ENCODE measurements at regions of chr6 and their contacts with region 1.

Region 1: GRCh38 chr6:24855395-24856245 is 56.9 kb upstream of the ARMH2 start:
- DNase-seq: peak; percentile 49 to 90 (median 61)
- ATAC-seq: peak; percentile 66
- H3K4me3 ChIP-seq: no peak overlapping the region
- H3K4me3 Mint-ChIP-seq: peak overlapping the region; percentile 17
- H3K27ac ChIP-seq: peak overlapping the region; percentile 35 to 61
- H3K27ac Mint-ChIP-seq: peak overlapping the region; percentile 93
- H3K4me1 ChIP-seq: peaks cover 51% of the 10 kb centered on the region
- H3K4me1 Mint-ChIP-seq: peaks cover 67% of the 10 kb centered on the region
- H3K27me3 ChIP-seq: no peaks in the 10 kb centered on the region
- H3K27me3 Mint-ChIP-seq: no peaks in the 10 kb centered on the region
- CTCF ChIP-seq: peak; percentile 79

Region 2: DNA sequence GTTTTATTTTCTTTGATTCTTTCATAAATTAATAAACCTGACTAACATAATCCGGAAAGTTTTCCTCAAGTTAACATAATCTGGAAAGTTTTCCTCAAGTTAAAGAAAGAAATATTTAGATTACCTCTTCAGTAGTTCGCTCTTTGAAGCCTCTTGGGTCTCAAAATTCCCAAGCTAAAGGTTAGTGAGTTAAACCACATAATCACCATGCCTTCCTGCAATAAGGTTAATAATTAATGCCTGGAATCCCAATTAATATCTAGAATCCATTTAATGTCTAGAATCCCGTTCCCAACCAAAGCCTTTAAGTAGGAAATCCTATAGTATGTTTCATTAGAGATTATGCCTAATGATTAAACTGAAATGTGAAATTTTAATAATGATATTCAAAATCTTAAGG is 510.6 kb before region 1 on chr6:
- CTCF ChIA-PET with region 1: no interaction called
- POLR2A ChIA-PET with region 1: no interaction called
- intact Hi-C with region 1: no loop called
- DNase-seq: no peak
- ATAC-seq: no peak
- H3K4me3 ChIP-seq: no peak overlapping the region
- H3K4me3 Mint-ChIP-seq: no peak overlapping the region
- H3K27ac ChIP-seq: no peak overlapping the region
- H3K27ac Mint-ChIP-seq: no peak overlapping the region
- H3K4me1 ChIP-seq: no peaks in the 10 kb centered on the region
- H3K4me1 Mint-ChIP-seq: no peaks in the 10 kb centered on the region
- H3K27me3 ChIP-seq: peaks cover 5 to 9% of the 10 kb centered on the region in 2 experiments
- H3K27me3 Mint-ChIP-seq: peaks cover 51% of the 10 kb centered on the region
- CTCF ChIP-seq: no peak

Region 3: DNA sequence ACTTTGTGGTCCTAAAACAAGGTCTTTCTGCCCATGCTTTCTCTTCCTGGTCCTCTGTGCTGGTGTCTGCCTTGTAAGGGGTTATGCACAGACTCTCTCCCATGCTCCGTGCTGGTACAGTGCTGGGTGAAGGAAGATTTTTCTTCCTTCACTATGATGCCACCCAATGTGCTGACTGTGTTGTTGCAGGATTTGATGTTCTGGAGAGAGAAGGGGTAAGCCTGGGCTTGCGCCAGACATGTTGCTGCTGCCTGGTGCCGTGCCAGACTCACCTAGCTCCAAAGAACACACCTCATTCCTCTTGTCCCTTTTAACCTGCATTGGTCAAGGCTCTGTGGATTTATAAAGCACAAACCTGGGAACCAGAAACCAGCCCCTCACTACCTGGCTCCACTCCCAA is 28.5 kb before region 1 on chr6:
- CTCF ChIA-PET with region 1: no interaction called
- POLR2A ChIA-PET with region 1: no interaction called
- intact Hi-C with region 1: no loop called
- DNase-seq: no peak
- ATAC-seq: no peak
- H3K4me3 ChIP-seq: no peak overlapping the region
- H3K4me3 Mint-ChIP-seq: no peak overlapping the region
- H3K27ac ChIP-seq: no peak overlapping the region
- H3K27ac Mint-ChIP-seq: peak overlapping the region; percentile 77
- H3K4me1 ChIP-seq: peaks cover 9% of the 10 kb centered on the region
- H3K4me1 Mint-ChIP-seq: peaks cover 20% of the 10 kb centered on the region
- H3K27me3 ChIP-seq: no peaks in the 10 kb centered on the region
- H3K27me3 Mint-ChIP-seq: no peaks in the 10 kb centered on the region
- CTCF ChIP-seq: no peak

Region 4: GRCh38 chr6:24867104-24867703 is 11.6 kb after region 1 on chr6:
- CTCF ChIA-PET with region 1: interaction called, 13 read pairs
- POLR2A ChIA-PET with region 1: interaction called, 18 read pairs
- intact Hi-C with region 1: no loop called
- DNase-seq: peak in 2 of 14 experiments; percentile 34 to 36
- ATAC-seq: no peak
- H3K4me3 ChIP-seq: no peak overlapping the region
- H3K4me3 Mint-ChIP-seq: peak overlapping the region; percentile 46
- H3K27ac ChIP-seq: peak overlapping the region; percentile 28 to 33
- H3K27ac Mint-ChIP-seq: peak overlapping the region; percentile 93
- H3K4me1 ChIP-seq: peaks cover 59% of the 10 kb centered on the region
- H3K4me1 Mint-ChIP-seq: peaks cover 79% of the 10 kb centered on the region
- H3K27me3 ChIP-seq: no peaks in the 10 kb centered on the region
- H3K27me3 Mint-ChIP-seq: no peaks in the 10 kb centered on the region
- CTCF ChIP-seq: peak; percentile 19

Region 5: GRCh38 chr6:24883618-24884017 is 28.0 kb after region 1 on chr6:
- CTCF ChIA-PET with region 1: interaction called, 10 read pairs
- POLR2A ChIA-PET with region 1: interaction called, 3 read pairs
- intact Hi-C with region 1: no loop called
- DNase-seq: peak in 2 of 14 experiments; percentile 23 to 41
- ATAC-seq: peak; percentile 47
- H3K4me3 ChIP-seq: no peak overlapping the region
- H3K4me3 Mint-ChIP-seq: peak overlapping the region; percentile 81
- H3K27ac ChIP-seq: peak overlapping the region in 1 of 2 donors; percentile 47
- H3K27ac Mint-ChIP-seq: peak overlapping the region; percentile 97
- H3K4me1 ChIP-seq: peaks cover 54% of the 10 kb centered on the region
- H3K4me1 Mint-ChIP-seq: peaks cover 94% of the 10 kb centered on the region
- H3K27me3 ChIP-seq: no peaks in the 10 kb centered on the region
- H3K27me3 Mint-ChIP-seq: no peaks in the 10 kb centered on the region
- CTCF ChIP-seq: no peak

Region 6: GRCh38 chr6:24919004-24919892 is 63.6 kb after region 1 on chr6:
- CTCF ChIA-PET with region 1: interaction called, 11 read pairs
- POLR2A ChIA-PET with region 1: interaction called, 6 read pairs
- intact Hi-C with region 1: no loop called
- DNase-seq: peak in 1 of 14 experiments; percentile 37
- ATAC-seq: peak; percentile 33
- H3K4me3 ChIP-seq: peak overlapping the region; percentile 17
- H3K4me3 Mint-ChIP-seq: peak overlapping the region; percentile 81
- H3K27ac ChIP-seq: peak overlapping the region; percentile 38 to 73
- H3K27ac Mint-ChIP-seq: peak overlapping the region; percentile 97
- H3K4me1 ChIP-seq: peaks cover 90% of the 10 kb centered on the region
- H3K4me1 Mint-ChIP-seq: peaks cover 93% of the 10 kb centered on the region
- H3K27me3 ChIP-seq: no peaks in the 10 kb centered on the region
- H3K27me3 Mint-ChIP-seq: no peaks in the 10 kb centered on the region
- CTCF ChIP-seq: no peak

Region 7: GRCh38 chr6:25504661-25505060 is 649.0 kb after region 1 on chr6:
- CTCF ChIA-PET with region 1: no interaction called
- POLR2A ChIA-PET with region 1: no interaction called
- intact Hi-C with region 1: no loop called
- DNase-seq: no peak
- ATAC-seq: no peak
- H3K4me3 ChIP-seq: no peak overlapping the region
- H3K4me3 Mint-ChIP-seq: no peak overlapping the region
- H3K27ac ChIP-seq: no peak overlapping the region
- H3K27ac Mint-ChIP-seq: no peak overlapping the region
- H3K4me1 ChIP-seq: no peaks in the 10 kb centered on the region
- H3K4me1 Mint-ChIP-seq: no peaks in the 10 kb centered on the region
- H3K27me3 ChIP-seq: no peaks in the 10 kb centered on the region
- H3K27me3 Mint-ChIP-seq: no peaks in the 10 kb centered on the region
- CTCF ChIP-seq: no peak

Measured in CD4-positive, alpha-beta T cell (primary cell).